Aorta (tissue), 5 donors: ENCODE measurements at regions of chr19 and their contacts with region 1.

Region 1: GRCh38 chr19:41449079-41449864 is 6.3 kb downstream of the ERICH4 start:
- DNase-seq: peak; percentile 83 to 91
- ATAC-seq: peak; percentile 93
- H3K4me3 ChIP-seq: no peak overlapping the region
- H3K27ac ChIP-seq: no peak overlapping the region
- H3K4me1 ChIP-seq: no peaks in the 10 kb centered on the region
- H3K27me3 ChIP-seq: no peaks in the 10 kb centered on the region

Region 2: DNA sequence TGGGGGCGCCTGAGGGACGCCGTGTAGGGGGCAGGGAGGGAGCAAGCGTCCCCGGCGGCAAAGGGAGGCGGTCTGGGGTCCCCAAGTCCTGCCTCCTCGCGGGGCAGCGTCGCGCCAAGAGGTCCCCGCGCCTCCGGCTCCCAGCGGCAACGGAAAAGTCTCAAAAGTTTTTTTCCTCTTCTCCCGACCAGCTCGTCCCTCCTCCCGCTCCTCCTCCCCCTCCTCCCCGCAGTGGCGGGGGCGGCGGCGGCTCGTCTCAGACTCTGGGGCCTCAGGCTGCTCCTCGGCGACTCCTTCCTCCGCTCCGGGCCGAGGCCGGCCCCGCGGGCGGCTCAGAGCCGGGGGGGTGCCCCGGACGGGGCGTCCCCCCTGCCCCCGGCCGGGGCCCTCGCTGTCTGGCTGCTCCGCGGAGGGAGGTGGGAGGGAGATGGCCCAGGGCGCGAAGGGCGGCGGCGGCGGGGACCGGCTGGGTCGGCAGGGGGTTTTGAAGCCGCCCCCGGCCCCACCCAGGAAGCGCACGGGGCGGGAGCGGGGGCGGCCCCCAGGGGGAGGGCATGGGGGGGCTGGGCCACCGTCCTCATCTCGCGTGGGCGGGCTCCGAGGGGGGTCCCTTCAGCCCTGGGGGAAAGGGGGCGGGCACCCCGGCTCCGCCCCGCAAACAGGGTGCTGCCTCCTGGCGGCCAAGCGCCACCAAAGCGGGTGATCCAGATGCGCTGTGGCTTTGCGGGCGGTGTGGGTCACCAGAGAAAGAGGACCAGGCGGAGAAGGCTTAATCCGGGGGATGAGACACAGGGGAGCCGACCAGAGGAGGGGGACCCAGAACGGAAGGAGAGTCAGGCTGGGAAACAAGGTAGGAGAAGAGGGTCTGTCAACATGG is 95.6 kb before region 1 on chr19 and contains the start of gene TGFB1:
- intact Hi-C with region 1: no loop called
- DNase-seq: peak; percentile 96 to 97
- ATAC-seq: peak; percentile 91
- H3K4me3 ChIP-seq: peak within 1 kb of the TSS; percentile 34 to 77
- H3K27ac ChIP-seq: peak within 1 kb of the TSS in 1 of 2 donors; percentile 34
- H3K4me1 ChIP-seq: no peaks in the 10 kb centered on the region
- H3K27me3 ChIP-seq: no peaks in the 10 kb centered on the region
- total RNA-seq, gene TGFB1: 81.6 to 97.5 TPM

Region 3: GRCh38 chr19:41426952-41427646 is 22.2 kb before region 1 on chr19 and contains the start of gene B3GNT8:
- intact Hi-C with region 1: no loop called
- DNase-seq: peak; percentile 92 to 94
- ATAC-seq: peak; percentile 94
- H3K4me3 ChIP-seq: peak within 1 kb of the TSS; percentile 33 to 53
- H3K27ac ChIP-seq: peak within 1 kb of the TSS in 1 of 2 donors; percentile 48
- H3K4me1 ChIP-seq: no peaks in the 10 kb centered on the region
- H3K27me3 ChIP-seq: no peaks in the 10 kb centered on the region
- total RNA-seq, gene B3GNT8: 3.2 to 3.9 TPM

Region 4: GRCh38 chr19:41570639-41571112 is 121.4 kb after region 1 on chr19:
- intact Hi-C with region 1: loop called in 1 of 2 experiments (anchors 5 kb)
- DNase-seq: peak; percentile 83 to 91
- ATAC-seq: peak; percentile 84
- H3K4me3 ChIP-seq: no peak overlapping the region
- H3K27ac ChIP-seq: no peak overlapping the region
- H3K4me1 ChIP-seq: no peaks in the 10 kb centered on the region
- H3K27me3 ChIP-seq: no peaks in the 10 kb centered on the region